ENCODE measurements at regions of chr17 and their contacts with region 1.

Region 1: GRCh38 chr17:76492989-76493501 is 8.2 kb downstream of the RHBDF2 start:
- DNase-seq: peak; percentile 48
- H3K4me3 Mint-ChIP-seq: peak overlapping the region; percentile 71
- H3K27ac Mint-ChIP-seq: peak overlapping the region; percentile 95
- H3K4me1 Mint-ChIP-seq: peaks cover 30% of the 10 kb centered on the region
- H3K27me3 Mint-ChIP-seq: no peaks in the 10 kb centered on the region

Region 2: DNA sequence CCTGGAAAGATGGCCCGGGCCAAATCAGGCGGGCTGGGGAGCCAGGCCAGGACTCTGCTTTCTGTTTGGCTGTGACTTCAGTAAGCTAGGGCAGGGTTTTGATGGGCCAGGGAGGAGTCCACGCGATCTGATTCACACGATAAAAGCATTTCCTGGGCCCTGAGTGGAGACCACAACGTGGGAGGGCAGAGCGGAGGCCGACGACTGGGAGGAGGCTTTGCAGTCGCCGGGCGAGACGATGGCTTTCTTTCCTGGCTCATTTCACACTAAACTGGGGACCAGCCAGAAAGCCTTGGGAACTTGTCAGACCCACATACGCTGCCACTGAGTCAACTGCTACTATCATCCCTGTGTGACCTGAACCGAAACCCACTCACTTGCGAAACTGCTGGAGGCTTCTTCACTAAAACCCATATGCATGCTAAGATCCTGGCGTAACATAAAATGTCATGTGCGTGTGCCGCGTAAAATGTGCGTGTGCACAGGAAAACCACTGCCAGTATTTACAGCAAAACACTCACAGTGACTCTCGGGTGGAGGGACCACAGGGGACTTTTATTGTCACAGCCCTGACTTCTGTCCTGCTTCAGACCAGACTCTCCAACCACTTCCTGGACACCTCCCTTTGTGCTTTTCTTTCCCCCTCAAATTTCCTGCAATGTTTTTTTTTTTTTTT is 22.4 kb after region 1 on chr17:
- intact Hi-C with region 1: loop called (anchors 1 kb)
- DNase-seq: peak; percentile 82
- H3K4me3 Mint-ChIP-seq: peak overlapping the region; percentile 55
- H3K27ac Mint-ChIP-seq: peak overlapping the region; percentile 99
- H3K4me1 Mint-ChIP-seq: peaks cover 49% of the 10 kb centered on the region
- H3K27me3 Mint-ChIP-seq: no peaks in the 10 kb centered on the region

Region 3: GRCh38 chr17:76671123-76671911 is 178.3 kb after region 1 on chr17:
- intact Hi-C with region 1: no loop called
- DNase-seq: peak; percentile 99
- H3K4me3 Mint-ChIP-seq: peak overlapping the region; percentile 91
- H3K27ac Mint-ChIP-seq: peak overlapping the region; percentile 90
- H3K4me1 Mint-ChIP-seq: peaks cover 24% of the 10 kb centered on the region
- H3K27me3 Mint-ChIP-seq: no peaks in the 10 kb centered on the region